ENCODE measurements at regions of chr6 and their contacts with region 1.

Region 1: GRCh38 chr6:45922728-45923351 is 92.8 kb downstream of the CLIC5 start:
- DNase-seq: peak; percentile 55
- ATAC-seq: peak; percentile 87 to 90

Region 2: DNA sequence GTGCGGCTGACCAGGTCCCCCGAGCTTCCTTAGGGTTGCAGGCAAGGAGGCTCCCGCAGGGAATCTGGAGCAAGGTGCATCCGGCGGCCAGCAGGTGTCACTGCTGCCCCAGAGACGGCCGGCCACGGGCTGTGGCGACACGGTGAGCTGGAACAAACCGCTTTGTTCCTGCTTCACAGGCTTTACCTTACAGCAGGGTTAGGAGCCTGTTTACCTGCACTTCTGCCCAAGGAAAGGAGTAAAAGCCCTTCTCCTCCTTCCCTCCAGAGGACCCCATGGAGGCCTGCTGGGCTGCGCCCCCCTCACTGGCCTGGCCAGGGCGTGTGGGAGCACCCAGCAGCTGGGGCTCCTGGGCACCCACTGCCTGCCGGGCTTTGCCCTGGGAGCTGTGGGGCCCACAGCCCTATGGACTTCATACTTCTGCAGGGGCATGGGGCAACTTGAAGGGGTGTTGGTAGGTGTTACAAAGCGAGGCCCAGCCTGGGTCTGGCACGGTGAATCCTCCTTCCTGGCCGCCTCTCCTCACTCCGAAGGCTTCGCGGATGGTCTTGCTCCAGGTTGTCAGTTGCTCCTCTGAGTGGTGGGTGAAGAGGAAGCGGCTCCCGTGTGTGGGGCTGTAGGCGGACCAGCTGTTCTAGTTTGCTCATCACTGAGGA is 1446.9 kb before region 1 on chr6:
- intact Hi-C with region 1: loop called in 1 of 2 experiments (anchors 10 kb)
- DNase-seq: peak; percentile 79
- ATAC-seq: peak; percentile 83 to 88

Region 3: GRCh38 chr6:44655412-44656342 is 1267.2 kb before region 1 on chr6:
- intact Hi-C with region 1: loop called in 1 of 2 experiments (anchors 10 kb)
- DNase-seq: peak; percentile 77
- ATAC-seq: peak; percentile 76 to 82

Region 4: GRCh38 chr6:45986746-45987274 is 64.0 kb after region 1 on chr6:
- intact Hi-C with region 1: no loop called
- DNase-seq: no peak
- ATAC-seq: peak; percentile 86 to 88

Region 5: DNA sequence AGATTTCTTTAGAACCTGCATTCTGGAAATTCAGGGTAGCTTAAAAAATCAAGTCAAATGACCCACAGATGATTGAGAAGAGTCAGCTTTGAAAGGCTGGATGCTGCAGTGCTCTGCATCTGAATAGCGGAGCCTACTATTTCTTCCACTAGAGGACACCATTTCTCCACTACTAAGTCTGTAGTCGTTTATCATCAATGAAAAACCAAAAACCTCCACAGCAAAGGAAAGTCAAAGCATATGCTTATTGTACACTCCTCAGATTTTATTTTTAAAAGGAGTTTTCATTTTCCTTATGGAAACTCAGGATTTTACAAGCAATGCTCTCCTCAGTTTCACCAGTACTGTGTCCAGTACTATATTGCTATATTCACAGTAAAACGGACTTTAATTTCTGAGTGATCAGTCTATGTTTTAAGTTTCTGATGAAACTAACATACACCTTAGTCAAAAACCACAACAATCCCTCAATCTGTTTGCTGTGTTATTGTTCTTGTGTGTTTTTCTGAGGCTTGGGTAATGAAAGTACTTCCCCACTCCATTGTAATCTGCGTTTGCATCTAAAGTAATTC is 298.5 kb after region 1 on chr6:
- intact Hi-C with region 1: no loop called
- DNase-seq: no peak
- ATAC-seq: peak; percentile 63 to 83

Region 6: DNA sequence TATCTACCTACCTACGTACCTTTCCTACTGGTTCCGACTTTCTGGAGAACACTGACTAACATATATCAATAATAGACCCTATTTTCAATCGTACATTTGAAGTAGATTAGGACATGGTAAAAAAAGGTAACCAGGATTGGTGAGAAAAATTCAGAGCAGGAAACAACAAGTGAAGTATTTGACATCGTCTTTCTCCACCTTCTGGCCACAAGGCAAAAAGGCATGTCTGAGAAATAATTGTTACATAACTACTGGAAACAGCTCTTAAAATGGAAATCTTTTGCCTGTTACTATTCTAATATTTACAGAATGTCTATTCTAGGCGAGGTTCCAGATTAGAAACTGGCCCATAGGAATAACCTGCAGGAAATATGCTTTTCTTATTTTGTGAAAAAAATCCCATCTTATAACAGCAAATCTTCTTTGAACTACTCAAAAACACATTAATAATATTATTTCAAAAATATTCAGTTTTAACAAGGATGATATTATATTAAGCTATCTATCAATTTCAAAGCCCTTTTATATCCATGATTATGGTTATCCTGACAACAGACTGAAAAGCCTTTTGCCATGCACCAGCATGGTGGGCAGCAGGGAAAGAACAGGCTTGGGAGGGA is 487.6 kb after region 1 on chr6:
- intact Hi-C with region 1: loop called in 1 of 2 experiments (anchors 10 kb)
- DNase-seq: no peak
- ATAC-seq: peak; percentile 42 to 53